Thyroid gland (tissue), 4 donors: ENCODE measurements at regions of chr16 and their contacts with region 1.

Region 1: GRCh38 chr16:28879841-28880588 is 1.7 kb downstream of the ATP2A1 start:
- DNase-seq: peak; percentile 76 to 78
- H3K4me3 ChIP-seq: peak overlapping the region in 2 of 3 donors; percentile 44 to 54
- H3K27ac ChIP-seq: no peak overlapping the region
- H3K4me1 ChIP-seq: peaks cover 7 to 12% of the 10 kb centered on the region in 2 donors
- H3K27me3 ChIP-seq: no peaks in the 10 kb centered on the region
- CTCF ChIP-seq: peak in 3 of 6 experiments; percentile 5 to 23 (median 12)
- POLR2A ChIP-seq: no peak

Region 2: GRCh38 chr16:28597692-28598261 is 282.2 kb before region 1 on chr16:
- intact Hi-C with region 1: no loop called
- DNase-seq: peak; percentile 87 to 89
- H3K4me3 ChIP-seq: no peak overlapping the region
- H3K27ac ChIP-seq: peak overlapping the region; percentile 84 to 96 (median 91)
- H3K4me1 ChIP-seq: peaks cover 20 to 23% of the 10 kb centered on the region in 2 donors
- H3K27me3 ChIP-seq: no peaks in the 10 kb centered on the region
- CTCF ChIP-seq: peak in 4 of 6 experiments; percentile 12 to 52 (median 44)
- POLR2A ChIP-seq: no peak

Region 3: GRCh38 chr16:28924732-28925385 is 44.8 kb after region 1 on chr16 and contains the start of gene RABEP2:
- intact Hi-C with region 1: loop called (anchors 5 kb)
- DNase-seq: peak; percentile 99
- H3K4me3 ChIP-seq: peak within 1 kb of the TSS; percentile 16 to 85 (median 65)
- H3K27ac ChIP-seq: peak within 1 kb of the TSS; percentile 91 to 99 (median 97)
- H3K4me1 ChIP-seq: peaks cover 8 to 11% of the 10 kb centered on the region in 2 donors
- H3K27me3 ChIP-seq: no peaks in the 10 kb centered on the region
- CTCF ChIP-seq: no peak
- POLR2A ChIP-seq: no peak
- total RNA-seq, gene RABEP2: 36.7 to 55.8 (median 41.2) TPM

Region 4: GRCh38 chr16:28943281-28943680 is 63.3 kb after region 1 on chr16:
- intact Hi-C with region 1: loop called (anchors 5 kb)
- DNase-seq: no peak
- H3K4me3 ChIP-seq: no peak overlapping the region
- H3K27ac ChIP-seq: no peak overlapping the region
- H3K4me1 ChIP-seq: peaks cover 0 to 9% of the 10 kb centered on the region in 2 donors
- H3K27me3 ChIP-seq: no peaks in the 10 kb centered on the region
- CTCF ChIP-seq: no peak
- POLR2A ChIP-seq: no peak